Right lobe of liver (tissue), 6 donors: ENCODE measurements at regions of chr5 and their contacts with region 1.

Region 1: GRCh38 chr5:40834849-40835787 is at the start of gene RPL37:
- DNase-seq: peak; percentile 96 to 97 (median 97)
- ATAC-seq: peak; percentile 98 to 100 (median 99)
- H3K4me3 ChIP-seq: peak within 1 kb of the TSS; percentile 71 to 93 (median 77)
- H3K27ac ChIP-seq: peak within 1 kb of the TSS; percentile 75 to 93 (median 83)
- H3K4me1 ChIP-seq: peaks cover 0 to 16% (median 5%) of the 10 kb centered on the region in 4 donors
- H3K27me3 ChIP-seq: no peaks in the 10 kb centered on the region
- CTCF ChIP-seq: peak in 1 of 4 donors; percentile 4
- POLR2A ChIP-seq: peak; percentile 88
- total RNA-seq, gene RPL37: 36.5 to 472 (median 400) TPM

Region 2: DNA sequence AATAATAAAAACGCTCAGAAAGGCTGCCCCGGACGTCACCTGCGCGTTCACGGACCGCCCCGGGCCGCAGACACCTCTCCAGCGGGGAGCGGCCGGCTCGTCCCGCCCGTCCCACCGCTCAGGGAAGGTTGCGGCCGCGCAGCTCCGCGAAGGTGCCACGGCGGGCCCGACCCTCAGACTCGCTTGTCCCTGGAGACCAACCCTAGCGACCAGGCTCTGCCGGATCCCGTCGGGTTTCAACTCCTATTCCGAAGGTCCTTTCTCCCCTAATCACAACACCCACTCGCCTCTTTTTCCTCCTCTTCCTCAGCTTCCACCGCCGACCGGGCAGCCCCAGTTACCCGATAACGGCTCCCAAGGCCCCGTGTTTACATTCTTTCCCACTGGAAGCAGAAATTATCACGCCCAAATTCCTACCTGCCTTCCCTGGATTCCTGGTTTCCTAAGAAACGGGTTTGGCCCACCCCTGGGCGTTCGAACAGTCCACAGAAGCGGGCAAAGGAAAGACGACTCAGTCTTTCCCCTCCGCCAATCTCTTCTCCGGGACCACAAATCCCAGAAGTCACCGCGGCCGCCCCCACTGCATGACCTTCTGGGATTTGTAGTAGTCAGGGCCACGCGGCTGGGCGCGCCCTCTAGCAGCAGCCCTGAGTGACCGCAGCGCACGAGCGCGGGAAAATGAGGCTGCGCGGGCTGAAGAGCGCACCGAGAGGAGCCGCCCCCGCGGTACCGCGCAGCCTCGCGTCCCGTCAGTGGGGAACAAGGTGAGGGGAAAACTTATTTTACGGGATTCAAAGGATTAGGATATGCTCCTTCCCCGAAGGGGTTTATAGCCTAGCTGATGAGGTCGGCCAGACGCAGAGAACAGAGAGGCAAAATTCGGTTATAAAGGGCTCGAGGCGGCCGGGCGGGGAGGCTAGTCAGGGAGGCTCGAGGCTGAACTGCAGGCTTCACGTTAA is 79.4 kb before region 1 on chr5 and contains the start of gene TTC33:
- intact Hi-C with region 1: loop called in 1 of 2 experiments (anchors 5 kb)
- DNase-seq: peak; percentile 97
- ATAC-seq: peak; percentile 96 to 99 (median 97)
- H3K4me3 ChIP-seq: peak within 1 kb of the TSS; percentile 66 to 85 (median 85)
- H3K27ac ChIP-seq: peak within 1 kb of the TSS; percentile 70 to 94 (median 89)
- H3K4me1 ChIP-seq: peaks cover 0 to 8% (median 4%) of the 10 kb centered on the region in 4 donors
- H3K27me3 ChIP-seq: no peaks in the 10 kb centered on the region
- CTCF ChIP-seq: peak; percentile 60 to 74 (median 68)
- POLR2A ChIP-seq: no peak
- total RNA-seq, gene TTC33: 5.6 to 9.2 (median 7.0) TPM